Heart right ventricle (tissue), 16 donors: ENCODE measurements at regions of chr16 and their contacts with region 1.

Region 1: GRCh38 chr16:14186007-14186794 is 115.1 kb downstream of the MRTFB start:
- DNase-seq: peak; percentile 27 to 56
- ATAC-seq: peak; percentile 55 to 81 (median 72)
- H3K4me3 ChIP-seq: peak overlapping the region; percentile 13 to 63 (median 50)
- H3K27ac ChIP-seq: peak overlapping the region; percentile 32 to 86 (median 78)
- H3K4me1 ChIP-seq: peaks cover 4 to 77% (median 46%) of the 10 kb centered on the region in 9 donors
- H3K27me3 ChIP-seq: no peaks in the 10 kb centered on the region
- CTCF ChIP-seq: peak in 7 of 9 donors; percentile 29 to 63 (median 56)

Region 2: DNA sequence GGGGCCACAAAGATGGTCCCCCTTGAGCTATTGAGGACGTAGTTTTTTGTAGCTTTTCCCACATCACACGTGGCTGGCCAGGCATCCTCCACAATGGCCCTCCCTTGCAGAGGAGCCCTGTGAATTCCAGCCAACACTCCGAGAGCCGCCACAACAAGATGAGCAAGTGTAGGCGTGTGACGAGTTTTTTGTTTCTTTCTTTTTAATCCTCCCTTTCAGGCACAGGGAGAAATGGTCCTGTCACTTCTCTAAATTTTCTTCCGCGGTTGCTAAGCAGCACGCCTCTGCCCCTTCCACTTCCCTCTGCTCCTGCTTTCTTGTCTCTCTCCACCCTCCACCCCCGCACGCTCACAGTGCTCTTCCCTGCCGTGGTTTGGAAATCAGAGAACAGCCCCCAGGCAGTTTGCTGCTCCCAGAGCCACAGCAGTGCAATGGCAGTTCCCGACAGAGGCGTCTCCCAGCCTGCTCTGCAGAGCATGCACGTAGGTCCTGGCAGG is 183.1 kb before region 1 on chr16:
- intact Hi-C with region 1: loop called in 4 of 10 experiments (anchors 5 to 10 kb)
- DNase-seq: peak; percentile 55 to 80
- ATAC-seq: peak; percentile 57 to 86 (median 72)
- H3K4me3 ChIP-seq: peak overlapping the region in 8 of 10 donors; percentile 17 to 48 (median 42)
- H3K27ac ChIP-seq: peak overlapping the region in 9 of 10 donors; percentile 62 to 84 (median 75)
- H3K4me1 ChIP-seq: peaks cover 8 to 73% (median 61%) of the 10 kb centered on the region in 9 donors
- H3K27me3 ChIP-seq: no peaks in the 10 kb centered on the region
- CTCF ChIP-seq: peak in 4 of 9 donors; percentile 21 to 39 (median 31)

Region 3: GRCh38 chr16:14070877-14071575 is 115.2 kb before region 1 on chr16 and contains the start of gene MRTFB:
- intact Hi-C with region 1: loop called in 3 of 10 experiments (anchors 5 to 10 kb)
- DNase-seq: peak; percentile 77 to 87
- ATAC-seq: peak; percentile 80 to 95 (median 92)
- H3K4me3 ChIP-seq: peak within 1 kb of the TSS; percentile 73 to 99 (median 92)
- H3K27ac ChIP-seq: peak within 1 kb of the TSS; percentile 53 to 94 (median 86)
- H3K4me1 ChIP-seq: peaks cover 0 to 37% (median 19%) of the 10 kb centered on the region in 9 donors
- H3K27me3 ChIP-seq: no peaks in the 10 kb centered on the region
- CTCF ChIP-seq: no peak
- total RNA-seq, gene MRTFB: 20.9 to 41.8 (median 33.0) TPM

Region 4: GRCh38 chr16:14097182-14097959 is 88.8 kb before region 1 on chr16:
- intact Hi-C with region 1: loop called in 3 of 10 experiments (anchors 5 to 10 kb)
- DNase-seq: no peak
- ATAC-seq: no peak
- H3K4me3 ChIP-seq: no peak overlapping the region
- H3K27ac ChIP-seq: peak overlapping the region in 2 of 10 donors; percentile 2 to 8
- H3K4me1 ChIP-seq: peaks cover 3 to 70% (median 44%) of the 10 kb centered on the region in 9 donors
- H3K27me3 ChIP-seq: no peaks in the 10 kb centered on the region
- CTCF ChIP-seq: no peak

Region 5: DNA sequence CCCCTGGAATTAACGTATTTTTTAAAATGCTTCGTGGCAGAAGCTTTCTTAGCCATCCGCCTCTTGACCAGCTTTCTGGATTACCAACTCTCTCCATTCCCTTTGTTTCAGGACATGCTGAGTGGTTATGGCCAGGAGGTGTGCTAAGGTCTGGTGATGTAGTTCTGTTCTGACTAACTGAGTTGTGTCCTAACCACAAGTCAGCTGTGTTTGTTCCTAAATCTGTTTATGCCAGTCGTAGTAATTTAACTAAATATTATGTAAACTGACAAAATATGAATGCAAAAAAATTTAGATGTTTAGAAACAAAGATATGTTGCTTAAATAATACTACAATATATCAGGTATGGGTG is 53.5 kb before region 1 on chr16:
- intact Hi-C with region 1: no loop called
- DNase-seq: no peak
- ATAC-seq: no peak
- H3K4me3 ChIP-seq: no peak overlapping the region
- H3K27ac ChIP-seq: no peak overlapping the region
- H3K4me1 ChIP-seq: peaks cover 0 to 27% (median 4%) of the 10 kb centered on the region in 9 donors
- H3K27me3 ChIP-seq: no peaks in the 10 kb centered on the region
- CTCF ChIP-seq: no peak

Region 6: DNA sequence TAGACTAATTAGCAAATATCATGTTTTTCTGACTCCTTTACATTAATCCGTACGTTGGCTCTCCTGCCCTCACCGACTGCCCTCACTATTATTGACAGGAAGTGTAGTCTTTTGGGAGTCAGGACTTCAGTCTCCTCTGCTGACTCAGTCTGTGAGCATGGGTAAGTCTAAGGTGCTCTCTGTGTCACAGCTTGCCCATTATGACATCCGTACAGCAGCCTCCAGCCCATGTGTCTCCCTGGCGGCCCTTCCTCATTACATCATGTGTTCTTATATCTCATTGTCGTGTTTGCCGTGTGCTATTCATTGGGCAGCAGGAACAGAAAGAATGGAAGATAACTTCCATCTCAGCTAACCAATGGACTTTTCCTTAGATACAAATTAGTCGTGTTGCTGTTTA is 37.6 kb before region 1 on chr16:
- intact Hi-C with region 1: loop called in 1 of 10 experiments (anchors 5 kb)
- DNase-seq: no peak
- ATAC-seq: peak in 1 of 8 donors; percentile 14
- H3K4me3 ChIP-seq: no peak overlapping the region
- H3K27ac ChIP-seq: no peak overlapping the region
- H3K4me1 ChIP-seq: peaks cover 0 to 33% (median 17%) of the 10 kb centered on the region in 9 donors
- H3K27me3 ChIP-seq: no peaks in the 10 kb centered on the region
- CTCF ChIP-seq: no peak